ENCODE measurements at regions of chr1 and their contacts with region 1.

Region 1: GRCh38 chr1:156054500-156055280 is at the start of gene LAMTOR2:
- DNase-seq: peak; percentile 91 to 99
- H3K4me3 ChIP-seq: peak within 1 kb of the TSS; percentile 93 to 99 (median 96)
- H3K27ac ChIP-seq: peak within 1 kb of the TSS; percentile 89
- H3K4me1 ChIP-seq: peaks cover 0 to 6% (median 0%) of the 10 kb centered on the region in 4 experiments; a peak in 2 of 7 replicates
- H3K27me3 ChIP-seq: no peaks in the 10 kb centered on the region
- CTCF ChIP-seq: no peak
- EP300 ChIP-seq: no peak
- POLR2A ChIP-seq: peak; percentile 57 to 73
- RAD21 ChIP-seq: no peak
- total RNA-seq, gene LAMTOR2: 50.5 and 54.7 TPM in 2 replicates

Region 2: DNA sequence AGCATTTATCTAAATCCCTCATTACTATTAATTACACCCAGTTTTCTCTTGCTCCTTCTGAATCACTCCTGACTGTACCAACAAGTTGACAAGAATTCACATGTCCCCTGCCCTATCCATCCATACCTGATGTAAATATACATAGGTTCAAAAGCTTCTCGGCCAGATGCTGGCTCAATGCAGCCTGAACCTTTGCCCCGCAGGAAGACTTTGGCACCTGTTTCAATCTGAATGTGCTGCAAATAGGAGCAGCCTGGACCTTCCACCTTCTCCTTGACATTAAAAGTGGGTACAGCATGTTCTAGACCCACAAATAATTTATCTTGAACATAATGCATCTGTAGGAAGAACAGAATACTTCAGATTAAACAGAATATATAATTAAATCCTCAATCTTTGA is 129.2 kb before region 1 on chr1:
- CTCF ChIA-PET with region 1: no interaction called
- POLR2A ChIA-PET with region 1: no interaction called
- DNase-seq: no peak
- H3K4me3 ChIP-seq: no peak overlapping the region
- H3K27ac ChIP-seq: no peak overlapping the region
- H3K4me1 ChIP-seq: no peaks in the 10 kb centered on the region
- H3K27me3 ChIP-seq: no peaks in the 10 kb centered on the region
- CTCF ChIP-seq: no peak
- EP300 ChIP-seq: no peak
- POLR2A ChIP-seq: no peak
- RAD21 ChIP-seq: no peak

Region 3: GRCh38 chr1:156020292-156021089 is 34.2 kb before region 1 on chr1 and contains the start of gene SSR2:
- CTCF ChIA-PET with region 1: interaction called, 5 read pairs
- POLR2A ChIA-PET with region 1: interaction called, 10 read pairs
- DNase-seq: peak; percentile 73 to 84
- H3K4me3 ChIP-seq: peak within 1 kb of the TSS; percentile 92 to 97 (median 94)
- H3K27ac ChIP-seq: no peak within 1 kb of the TSS
- H3K4me1 ChIP-seq: peaks cover 0 to 3% (median under 1%) of the 10 kb centered on the region in 4 experiments; a peak in 3 of 7 replicates
- H3K27me3 ChIP-seq: peaks cover 0 to 4% (median under 1%) of the 10 kb centered on the region in 4 experiments; a peak in 1 of 7 replicates
- CTCF ChIP-seq: no peak
- EP300 ChIP-seq: no peak
- POLR2A ChIP-seq: peak in 1 of 2 experiments; percentile 74; a peak in 2 of 3 replicates
- RAD21 ChIP-seq: no peak
- total RNA-seq, gene SSR2: 190 and 196 TPM in 2 replicates

Region 4: DNA sequence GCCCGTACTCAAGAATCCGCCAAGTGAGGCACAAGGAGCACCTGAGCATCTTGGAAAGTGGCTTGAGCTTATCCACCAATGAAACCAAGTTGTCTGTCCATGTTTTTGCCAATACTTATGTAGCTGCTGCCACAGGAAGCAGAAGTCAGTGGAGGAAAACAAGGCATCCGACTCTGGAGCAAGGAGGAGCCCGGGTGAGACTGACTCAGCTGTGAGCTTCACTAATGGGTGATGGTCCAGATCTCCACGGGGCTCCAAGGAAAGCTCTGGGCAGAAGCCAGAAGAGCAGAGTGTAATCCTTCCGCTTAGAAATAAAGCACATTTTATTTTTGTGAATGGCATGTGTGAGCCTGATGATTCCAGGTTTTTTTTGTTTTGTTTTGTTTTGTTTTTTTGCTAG is 21.7 kb before region 1 on chr1:
- CTCF ChIA-PET with region 1: interaction called, 30 read pairs
- POLR2A ChIA-PET with region 1: interaction called, 5 read pairs
- DNase-seq: no peak
- H3K4me3 ChIP-seq: no peak overlapping the region
- H3K27ac ChIP-seq: no peak overlapping the region
- H3K4me1 ChIP-seq: no peaks in the 10 kb centered on the region; a peak in 3 of 7 replicates
- H3K27me3 ChIP-seq: no peaks in the 10 kb centered on the region
- CTCF ChIP-seq: no peak
- EP300 ChIP-seq: no peak
- POLR2A ChIP-seq: no peak
- RAD21 ChIP-seq: no peak

Region 5: DNA sequence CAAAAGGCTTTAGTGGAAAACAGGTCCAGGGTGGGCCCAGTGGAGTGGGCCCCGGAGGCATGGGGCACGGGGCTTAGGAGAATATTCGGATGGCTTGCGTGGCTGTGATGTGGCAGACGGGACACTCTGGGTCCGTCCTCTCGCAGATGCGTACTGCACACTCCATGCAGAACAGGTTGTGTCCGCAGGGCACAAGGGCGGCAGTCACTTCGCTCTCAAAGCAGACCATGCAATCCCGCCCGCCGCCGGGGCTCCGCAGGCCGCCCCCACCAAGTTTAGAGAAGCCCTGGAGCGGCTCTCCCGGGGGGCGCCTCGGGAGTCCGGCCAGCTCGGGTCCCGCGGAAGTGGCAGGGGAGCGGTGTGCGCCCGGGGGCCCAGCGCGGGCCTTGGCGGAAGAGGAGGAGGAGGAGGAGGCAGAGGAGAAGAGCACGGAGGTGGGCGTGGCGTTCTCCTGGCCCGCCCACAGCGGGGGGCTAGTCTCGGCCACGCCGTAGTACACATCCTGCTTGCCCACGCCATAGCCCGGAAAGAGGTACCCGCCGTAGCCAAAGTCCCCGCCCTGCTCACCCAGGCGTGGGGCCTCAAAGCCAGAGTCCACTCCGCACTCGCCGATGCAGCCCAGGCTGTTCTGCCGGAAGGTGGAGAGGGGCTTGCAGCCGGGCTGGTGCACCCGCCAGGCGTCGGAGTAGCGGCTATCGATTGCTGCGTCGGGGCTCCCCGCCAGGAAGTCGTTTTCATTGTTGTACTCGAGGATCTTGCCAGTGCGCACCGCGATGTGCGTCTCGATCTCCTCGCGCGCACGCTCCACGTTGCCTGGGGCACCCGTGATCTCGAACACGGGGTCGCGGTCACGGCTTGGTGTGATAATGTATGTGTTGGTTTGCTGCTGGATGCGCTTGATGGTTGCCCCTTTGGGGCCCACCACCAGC is 22.1 kb after region 1 on chr1:
- CTCF ChIA-PET with region 1: interaction called, 139 read pairs
- POLR2A ChIA-PET with region 1: interaction called, 88 read pairs
- DNase-seq: peak in 1 of 2 experiments; percentile 84
- H3K4me3 ChIP-seq: peak overlapping the region in 3 of 4 experiments; percentile 2 to 44 (median 4); a peak in 5 of 8 replicates
- H3K27ac ChIP-seq: peak overlapping the region; percentile 53; the same call in 1 of the 2 replicates
- H3K4me1 ChIP-seq: peaks cover 24 to 57% (median 48%) of the 10 kb centered on the region in 4 experiments
- H3K27me3 ChIP-seq: no peaks in the 10 kb centered on the region
- CTCF ChIP-seq: no peak
- EP300 ChIP-seq: no peak
- POLR2A ChIP-seq: no peak
- RAD21 ChIP-seq: no peak

Region 6: DNA sequence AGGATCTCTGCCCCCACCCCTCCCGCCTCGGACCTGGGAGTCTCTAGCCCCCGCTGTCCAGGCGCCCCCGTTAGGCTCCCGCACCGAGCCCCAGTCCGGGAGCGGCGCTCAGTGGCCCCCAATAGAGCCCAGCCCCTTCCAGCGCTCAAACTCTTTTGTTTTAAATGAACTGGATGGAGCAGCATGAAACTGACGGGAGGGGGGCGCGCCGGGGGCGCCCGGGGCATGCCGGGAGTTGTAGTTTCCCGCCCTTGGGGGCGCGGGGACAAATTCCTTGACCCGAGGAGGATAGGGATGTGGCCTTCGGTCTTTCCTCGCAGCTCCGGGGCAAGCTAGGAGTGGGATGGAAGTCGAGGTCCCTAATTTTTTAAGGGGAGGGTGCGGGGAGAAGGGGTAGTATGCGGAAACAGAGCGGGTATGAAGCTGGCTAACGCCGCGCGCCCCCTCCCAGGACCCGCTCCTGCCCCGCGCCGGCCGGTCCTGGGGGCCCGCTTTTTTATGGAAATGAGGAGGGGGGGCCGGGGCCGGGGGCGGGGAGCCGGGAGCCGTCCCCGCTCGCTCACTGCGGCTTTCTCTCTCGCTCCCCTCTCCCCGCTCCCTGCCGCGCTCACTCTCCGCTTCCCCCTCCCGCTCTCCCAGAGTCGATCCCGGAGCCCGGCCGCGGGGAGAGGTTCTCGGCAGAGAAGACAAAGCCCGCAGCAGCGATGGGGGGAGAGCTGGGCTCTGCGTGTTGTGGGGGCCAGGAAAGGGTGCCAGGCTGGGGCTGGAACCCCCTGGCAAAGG is 27.8 kb after region 1 on chr1 and contains the start of gene MEX3A:
- CTCF ChIA-PET with region 1: interaction called, 4 read pairs
- POLR2A ChIA-PET with region 1: interaction called, 13 read pairs
- DNase-seq: peak; percentile 92 to 98
- H3K4me3 ChIP-seq: peak within 1 kb of the TSS; percentile 86 to 98 (median 94)
- H3K27ac ChIP-seq: peak within 1 kb of the TSS; percentile 86
- H3K4me1 ChIP-seq: peaks cover 10 to 23% (median 13%) of the 10 kb centered on the region in 4 experiments
- H3K27me3 ChIP-seq: no peaks in the 10 kb centered on the region
- CTCF ChIP-seq: no peak
- EP300 ChIP-seq: peak in 1 of 2 experiments; percentile 60; a peak in 1 of 3 replicates
- POLR2A ChIP-seq: peak; percentile 48 to 54; a peak in 2 of 3 replicates
- RAD21 ChIP-seq: no peak
- total RNA-seq, gene MEX3A: 52.4 and 54.7 TPM in 2 replicates

Region 7: DNA sequence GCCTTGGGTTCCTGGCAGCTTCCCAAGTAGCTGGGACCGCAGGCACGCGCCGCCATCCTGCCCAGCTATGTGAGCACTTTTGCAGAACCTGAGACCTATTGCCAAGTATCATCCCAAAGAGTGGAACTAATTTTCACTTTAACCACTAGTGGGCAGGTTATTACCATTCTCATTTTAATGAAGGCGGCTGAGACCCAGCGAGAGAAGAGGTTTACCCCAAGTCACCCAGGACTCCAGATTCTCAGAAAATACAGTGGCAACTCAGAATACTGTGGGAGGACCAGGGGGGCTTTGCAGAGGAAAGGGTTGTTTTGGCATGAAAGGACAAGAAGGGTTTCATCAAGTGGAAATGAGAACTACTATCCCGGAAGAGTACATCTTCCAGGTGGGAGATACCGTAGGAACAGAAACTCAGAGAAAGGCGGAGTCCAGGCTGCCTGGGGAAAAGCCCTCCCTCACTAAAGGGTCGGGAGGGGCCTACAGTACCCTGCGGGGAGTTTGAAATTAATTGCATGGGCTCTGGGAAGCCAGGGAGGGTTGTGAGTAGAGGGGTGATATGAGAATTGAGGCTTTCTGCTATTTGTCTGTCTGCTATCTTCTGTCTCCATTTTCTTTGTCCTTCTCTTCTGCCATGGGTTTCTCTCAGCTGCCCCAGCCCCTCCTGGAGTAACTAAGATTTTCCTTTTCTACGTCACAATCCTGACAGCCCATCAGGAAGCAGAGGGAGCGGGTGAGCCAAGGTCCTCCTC is 91.5 kb after region 1 on chr1:
- CTCF ChIA-PET with region 1: no interaction called
- POLR2A ChIA-PET with region 1: no interaction called
- DNase-seq: no peak
- H3K4me3 ChIP-seq: peak overlapping the region in 1 of 4 experiments; percentile 35; a peak in 3 of 8 replicates
- H3K27ac ChIP-seq: peak overlapping the region; percentile 17; the same call in 1 of the 2 replicates
- H3K4me1 ChIP-seq: peaks cover 20 to 39% (median 29%) of the 10 kb centered on the region in 4 experiments
- H3K27me3 ChIP-seq: no peaks in the 10 kb centered on the region
- CTCF ChIP-seq: peak in 2 of 3 experiments; percentile 60 to 62; a peak in 3 of 4 replicates
- EP300 ChIP-seq: no peak
- POLR2A ChIP-seq: no peak
- RAD21 ChIP-seq: peak; percentile 74 to 79